Panc1 (cell line): ENCODE measurements at regions of chr21 and their contacts with region 1.

Region 1: GRCh38 chr21:28336314-28336713 is 656.4 kb downstream of the LTN1 start:
- DNase-seq: no peak
- ATAC-seq: no peak
- H3K4me3 ChIP-seq: no peak overlapping the region
- H3K27ac ChIP-seq: no peak overlapping the region
- H3K4me1 ChIP-seq: no peaks in the 10 kb centered on the region
- H3K27me3 ChIP-seq: no peaks in the 10 kb centered on the region
- CTCF ChIP-seq: peak; percentile 11; the same call in 1 of the 2 replicates

Region 2: GRCh38 chr21:26845066-26845758 is 1491.1 kb before region 1 on chr21 and contains the start of gene ADAMTS1:
- CTCF ChIA-PET with region 1: no interaction called
- POLR2A ChIA-PET with region 1: no interaction called
- in situ Hi-C with region 1: no loop called
- intact Hi-C with region 1: loop called (anchors 5 kb)
- DNase-seq: no peak
- ATAC-seq: peak; percentile 63
- H3K4me3 ChIP-seq: peak within 1 kb of the TSS; percentile 48 to 67
- H3K27ac ChIP-seq: no peak within 1 kb of the TSS
- H3K4me1 ChIP-seq: no peaks in the 10 kb centered on the region; the same call in 1 of the 2 replicates
- H3K27me3 ChIP-seq: peaks cover 5% of the 10 kb centered on the region; the same call in 1 of the 2 replicates
- CTCF ChIP-seq: peak; percentile 8; the same call in 1 of the 2 replicates
- total RNA-seq, gene ADAMTS1: 3.3 TPM

Region 3: GRCh38 chr21:28074676-28075075 is 261.6 kb before region 1 on chr21:
- CTCF ChIA-PET with region 1: no interaction called
- POLR2A ChIA-PET with region 1: no interaction called
- in situ Hi-C with region 1: no loop called
- intact Hi-C with region 1: loop called (anchors 10 kb)
- DNase-seq: no peak
- ATAC-seq: no peak
- H3K4me3 ChIP-seq: no peak overlapping the region
- H3K27ac ChIP-seq: no peak overlapping the region
- H3K4me1 ChIP-seq: no peaks in the 10 kb centered on the region
- H3K27me3 ChIP-seq: no peaks in the 10 kb centered on the region
- CTCF ChIP-seq: no peak